WTC11 (cell line): ENCODE measurements at regions of chr4 and their contacts with region 1.

Region 1: GRCh38 chr4:177250056-177250696 is 59.5 kb upstream of the NEIL3 start:
- DNase-seq: peak; percentile 79
- ATAC-seq: peak; percentile 99
- H3K4me3 Mint-ChIP-seq: no peak overlapping the region
- H3K27ac Mint-ChIP-seq: no peak overlapping the region; the same call in 1 of the 2 replicates
- H3K4me1 Mint-ChIP-seq: peaks cover 4% of the 10 kb centered on the region
- H3K27me3 Mint-ChIP-seq: no peaks in the 10 kb centered on the region
- CTCF ChIP-seq: peak; percentile 86

Region 2: GRCh38 chr4:177263818-177264217 is 13.6 kb after region 1 on chr4:
- CTCF ChIA-PET with region 1: interaction called, 12 read pairs
- POLR2A ChIA-PET with region 1: no interaction called
- DNase-seq: no peak
- ATAC-seq: peak; percentile 76
- H3K4me3 Mint-ChIP-seq: no peak overlapping the region
- H3K27ac Mint-ChIP-seq: no peak overlapping the region
- H3K4me1 Mint-ChIP-seq: peaks cover 11% of the 10 kb centered on the region; the same call in 1 of the 2 replicates
- H3K27me3 Mint-ChIP-seq: no peaks in the 10 kb centered on the region
- CTCF ChIP-seq: no peak

Region 3: DNA sequence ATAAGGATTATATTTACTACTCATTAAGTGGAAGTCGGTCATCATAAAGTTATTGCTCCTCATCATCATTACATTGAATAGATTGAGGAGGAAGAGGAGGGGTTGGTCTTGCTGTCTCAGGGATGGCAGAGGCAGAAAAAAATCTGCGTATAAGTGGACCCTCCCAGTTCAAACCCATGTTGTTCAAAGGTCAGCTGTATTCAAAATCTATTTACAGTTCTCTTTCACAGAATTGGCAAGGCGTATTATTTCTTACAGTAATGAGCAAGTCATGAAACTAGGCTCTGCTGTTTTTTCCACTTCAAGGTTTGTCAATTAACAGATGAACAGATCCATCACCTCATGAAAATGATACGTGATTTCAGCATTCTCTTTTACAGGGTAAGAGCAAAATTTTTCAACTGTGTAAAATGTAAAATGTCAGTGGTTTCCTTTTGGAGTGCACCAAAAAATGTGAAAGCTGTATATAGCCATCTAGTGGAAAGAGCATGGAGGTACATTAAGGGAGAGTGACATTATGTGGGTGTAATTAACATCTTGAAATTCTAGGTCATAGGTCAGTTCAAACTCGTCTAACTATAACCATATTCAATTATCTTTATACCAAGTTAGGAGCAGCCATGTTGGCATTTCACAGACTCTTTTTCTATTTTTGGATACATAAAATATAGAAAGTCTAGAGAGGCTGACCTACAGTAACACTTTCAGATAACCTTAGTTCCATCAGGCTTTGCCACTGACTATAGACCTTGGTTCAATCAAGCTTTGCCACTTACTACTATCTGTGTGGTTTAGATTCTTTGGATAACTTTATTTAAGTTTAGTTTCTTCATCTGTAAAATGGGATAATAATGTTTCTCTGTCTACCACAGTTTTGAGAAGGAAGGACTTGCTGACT is 89.5 kb after region 1 on chr4:
- CTCF ChIA-PET with region 1: interaction called, 22 read pairs
- POLR2A ChIA-PET with region 1: no interaction called
- DNase-seq: no peak
- ATAC-seq: peak; percentile 80
- H3K4me3 Mint-ChIP-seq: no peak overlapping the region
- H3K27ac Mint-ChIP-seq: no peak overlapping the region
- H3K4me1 Mint-ChIP-seq: no peaks in the 10 kb centered on the region
- H3K27me3 Mint-ChIP-seq: no peaks in the 10 kb centered on the region
- CTCF ChIP-seq: no peak

Region 4: DNA sequence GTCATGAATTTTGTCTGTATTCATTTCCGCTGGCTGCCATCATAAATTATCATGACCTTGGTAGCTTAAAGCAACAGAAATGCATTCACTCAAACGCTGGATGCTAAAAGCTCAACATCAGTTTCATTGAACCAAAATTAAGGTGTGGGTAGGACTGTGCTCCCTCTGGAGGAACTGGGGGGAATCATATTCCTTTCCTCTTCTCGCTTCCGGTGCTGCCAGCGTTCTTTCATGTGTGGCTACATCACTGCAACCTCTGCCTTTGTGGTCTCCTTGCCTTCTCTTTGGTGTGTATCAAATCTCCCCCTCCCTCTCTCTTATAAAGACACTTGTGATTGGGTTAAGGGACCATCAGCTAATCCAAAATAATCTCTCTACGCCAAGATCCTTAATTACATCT is 99.0 kb after region 1 on chr4:
- CTCF ChIA-PET with region 1: interaction called, 14 read pairs
- POLR2A ChIA-PET with region 1: interaction called, 3 read pairs
- DNase-seq: no peak
- ATAC-seq: peak; percentile 67
- H3K4me3 Mint-ChIP-seq: no peak overlapping the region
- H3K27ac Mint-ChIP-seq: no peak overlapping the region
- H3K4me1 Mint-ChIP-seq: peaks cover 11% of the 10 kb centered on the region
- H3K27me3 Mint-ChIP-seq: no peaks in the 10 kb centered on the region
- CTCF ChIP-seq: no peak

Region 5: GRCh38 chr4:177380730-177381287 is 130.6 kb after region 1 on chr4:
- CTCF ChIA-PET with region 1: interaction called, 46 read pairs
- POLR2A ChIA-PET with region 1: no interaction called
- DNase-seq: peak; percentile 71
- ATAC-seq: peak; percentile 99
- H3K4me3 Mint-ChIP-seq: no peak overlapping the region
- H3K27ac Mint-ChIP-seq: no peak overlapping the region
- H3K4me1 Mint-ChIP-seq: peaks cover 8% of the 10 kb centered on the region
- H3K27me3 Mint-ChIP-seq: no peaks in the 10 kb centered on the region
- CTCF ChIP-seq: no peak

Region 6: DNA sequence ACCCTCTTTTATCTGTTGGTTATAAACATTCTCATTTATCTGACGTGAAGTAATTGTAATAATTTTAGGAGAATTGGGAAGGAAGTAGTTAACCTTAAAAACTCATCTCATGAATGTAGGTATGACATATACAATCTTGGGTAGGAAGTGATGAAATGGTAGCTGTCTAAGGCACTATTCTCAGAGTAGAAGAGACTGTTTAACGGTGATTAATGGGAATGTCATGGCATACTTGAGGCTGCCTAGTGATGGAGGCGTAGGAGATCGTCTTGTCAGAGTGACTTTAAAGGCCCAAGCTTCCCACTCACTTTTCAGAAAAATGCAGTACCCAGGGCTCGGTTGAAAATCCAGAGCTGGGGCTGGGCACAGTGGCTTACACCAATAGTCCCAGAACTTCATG is 211.4 kb after region 1 on chr4:
- CTCF ChIA-PET with region 1: no interaction called
- POLR2A ChIA-PET with region 1: no interaction called
- DNase-seq: no peak
- ATAC-seq: no peak
- H3K4me3 Mint-ChIP-seq: no peak overlapping the region
- H3K27ac Mint-ChIP-seq: no peak overlapping the region
- H3K4me1 Mint-ChIP-seq: peaks cover 15% of the 10 kb centered on the region
- H3K27me3 Mint-ChIP-seq: no peaks in the 10 kb centered on the region
- CTCF ChIP-seq: no peak